Lower leg skin (tissue), 4 donors: ENCODE measurements at regions of chr4 and their contacts with region 1.

Region 1: GRCh38 chr4:113144091-113144490 is 94.6 kb downstream of the ANK2 start:
- DNase-seq: no peak
- H3K4me3 ChIP-seq: no peak overlapping the region
- CTCF ChIP-seq: no peak
- POLR2A ChIP-seq: no peak

Region 2: DNA sequence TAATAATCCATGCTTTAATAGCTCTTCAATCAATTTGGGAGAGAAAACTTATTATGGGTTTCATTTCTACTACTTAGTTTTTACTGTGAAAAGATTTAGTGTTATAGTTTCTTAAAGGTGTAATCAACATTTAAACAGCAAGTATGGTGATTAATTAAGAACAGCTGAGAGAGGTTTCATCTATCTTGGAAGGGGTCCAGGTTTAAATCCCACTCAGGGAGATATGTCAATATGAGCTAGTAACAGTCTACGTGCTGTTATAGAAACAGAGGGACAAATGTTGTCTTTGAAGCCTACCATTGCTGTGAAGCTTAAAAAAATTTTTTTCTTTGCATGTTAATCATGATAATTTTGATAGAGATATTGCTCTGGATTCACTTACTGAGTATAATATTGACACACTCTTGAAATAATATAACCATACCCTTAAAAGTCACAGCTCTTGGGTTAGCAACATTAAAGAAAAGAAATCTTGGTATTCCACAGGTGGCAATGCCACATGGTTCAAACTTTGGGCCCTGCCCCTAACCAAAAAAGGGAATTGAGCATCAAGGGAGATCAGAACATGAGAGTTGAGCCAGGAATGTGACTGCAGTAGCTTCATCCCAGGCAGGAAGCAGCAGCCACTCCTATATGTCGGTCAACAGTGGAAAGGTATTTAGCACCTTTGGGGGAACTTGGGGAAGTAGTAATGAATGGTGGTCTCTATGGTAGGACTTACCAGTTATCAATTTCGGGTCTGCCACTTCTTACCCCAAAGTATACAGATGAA is 13.2 kb after region 1 on chr4:
- intact Hi-C with region 1: loop called (anchors 1 kb)
- DNase-seq: no peak
- H3K4me3 ChIP-seq: no peak overlapping the region
- CTCF ChIP-seq: no peak
- POLR2A ChIP-seq: no peak